Heart left ventricle (tissue), 16 donors: ENCODE measurements at regions of chr19 and their contacts with region 1.

Region 1: GRCh38 chr19:48290771-48291488 is 21.0 kb downstream of the ZNF114 start:
- DNase-seq: peak; percentile 76 to 89 (median 80)
- ATAC-seq: peak; percentile 63 to 94 (median 88)
- H3K4me3 ChIP-seq: peak overlapping the region; percentile 31 to 59 (median 48)
- H3K27ac ChIP-seq: peak overlapping the region in 3 of 12 donors; percentile 4 to 51 (median 41)
- H3K4me1 ChIP-seq: peaks cover 0 to 15% (median 10%) of the 10 kb centered on the region in 12 donors
- H3K27me3 ChIP-seq: peaks cover 0 to 3% (median 0%) of the 10 kb centered on the region in 9 donors
- CTCF ChIP-seq: peak; percentile 94 to 99 (median 97)
- POLR2A ChIP-seq: peak in 1 of 2 donors; percentile 22

Region 2: DNA sequence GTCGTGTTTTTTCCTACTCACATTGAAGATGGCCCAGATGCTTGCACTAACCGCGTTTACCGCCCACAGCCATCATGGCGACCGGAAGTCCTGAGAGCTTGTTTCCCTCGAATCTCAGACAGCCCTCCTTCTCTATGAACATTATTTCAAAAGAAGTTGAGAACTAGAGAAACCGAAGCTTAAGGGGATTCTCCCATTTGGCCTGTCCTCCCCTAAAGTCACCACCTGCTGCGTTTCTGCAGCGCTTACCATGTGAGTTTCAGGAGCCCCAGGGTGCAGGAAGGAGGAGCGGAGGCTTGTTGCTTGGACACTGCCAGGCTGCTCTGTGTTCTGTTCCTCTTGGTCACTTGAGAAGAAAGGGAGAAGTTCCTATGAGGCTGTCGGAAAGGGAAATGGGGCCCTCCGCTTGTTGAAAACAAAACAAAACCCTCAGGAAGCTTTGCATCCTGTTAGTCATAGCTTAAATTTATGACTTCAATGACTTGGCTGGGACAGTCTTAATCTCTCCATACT is 41.4 kb before region 1 on chr19:
- intact Hi-C with region 1: no loop called
- DNase-seq: peak; percentile 52 to 76 (median 69)
- ATAC-seq: peak; percentile 82 to 96 (median 88)
- H3K4me3 ChIP-seq: peak overlapping the region in 11 of 12 donors; percentile 19 to 64 (median 47)
- H3K27ac ChIP-seq: peak overlapping the region; percentile 55 to 97 (median 73)
- H3K4me1 ChIP-seq: peaks cover 0 to 80% (median 31%) of the 10 kb centered on the region in 12 donors
- H3K27me3 ChIP-seq: no peaks in the 10 kb centered on the region
- CTCF ChIP-seq: no peak
- POLR2A ChIP-seq: peak in 1 of 2 donors; percentile 47

Region 3: DNA sequence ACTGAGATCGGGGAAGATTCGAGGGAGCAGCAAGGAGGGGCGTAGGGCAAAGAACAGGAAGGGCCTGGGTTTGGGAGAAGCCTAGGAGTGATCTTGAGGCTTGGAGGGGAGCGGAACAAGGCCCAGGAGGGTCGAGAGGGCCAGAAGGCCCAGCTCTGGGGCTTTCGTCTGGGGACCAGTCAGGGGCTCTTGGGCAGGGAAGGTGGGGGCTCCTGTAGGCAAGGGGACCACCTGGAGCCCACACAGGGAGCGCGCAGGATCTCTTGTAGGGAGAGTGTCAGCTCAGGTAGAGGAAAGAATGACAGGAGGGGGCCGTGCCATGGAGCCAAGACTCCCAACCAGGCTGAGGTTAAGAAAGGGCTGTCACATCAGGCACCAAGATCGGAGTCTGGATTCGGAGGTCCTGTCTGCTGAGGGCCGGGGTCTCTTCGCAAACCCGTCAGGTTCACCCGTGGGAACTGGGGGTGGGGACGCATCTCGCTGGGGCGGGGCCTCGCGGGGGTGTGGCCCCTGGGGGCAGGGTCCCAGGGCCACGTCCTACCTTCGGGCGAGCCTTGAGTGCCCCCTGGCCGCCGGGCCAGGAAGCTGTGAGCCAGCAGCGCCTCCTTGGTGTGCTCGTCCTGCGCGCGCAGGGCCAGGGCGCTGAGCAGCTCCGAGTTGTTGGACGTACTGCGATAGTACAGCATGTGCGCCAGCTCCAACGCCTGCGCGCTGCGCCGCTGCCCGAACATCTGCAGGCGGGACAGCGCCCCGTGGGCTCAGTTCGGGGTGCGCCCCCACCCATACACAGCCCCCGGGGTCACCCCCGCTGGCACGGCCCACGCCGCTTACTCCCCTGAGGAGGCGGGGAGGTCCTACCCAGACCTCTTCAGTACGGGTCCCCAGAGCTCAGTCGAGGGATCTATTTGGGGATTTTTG is 42.8 kb after region 1 on chr19:
- intact Hi-C with region 1: loop called in 1 of 10 experiments (anchors 2 kb)
- DNase-seq: peak; percentile 88 to 97 (median 93)
- ATAC-seq: peak; percentile 68 to 87 (median 86)
- H3K4me3 ChIP-seq: peak overlapping the region; percentile 9 to 63 (median 50)
- H3K27ac ChIP-seq: peak overlapping the region; percentile 51 to 93 (median 87)
- H3K4me1 ChIP-seq: peaks cover 0 to 57% (median 25%) of the 10 kb centered on the region in 12 donors
- H3K27me3 ChIP-seq: no peaks in the 10 kb centered on the region
- CTCF ChIP-seq: peak; percentile 72 to 96 (median 87)
- POLR2A ChIP-seq: no peak

Region 4: GRCh38 chr19:48530066-48530720 is 239.3 kb after region 1 on chr19:
- intact Hi-C with region 1: no loop called
- DNase-seq: peak in 1 of 5 donors; percentile 13
- ATAC-seq: no peak
- H3K4me3 ChIP-seq: no peak overlapping the region
- H3K27ac ChIP-seq: no peak overlapping the region
- H3K4me1 ChIP-seq: no peaks in the 10 kb centered on the region
- H3K27me3 ChIP-seq: peaks cover 0 to 4% (median 0%) of the 10 kb centered on the region in 9 donors
- CTCF ChIP-seq: no peak
- POLR2A ChIP-seq: no peak